Common myeloid progenitor, CD34-positive (primary cell): ENCODE measurements at regions of chr12 and their contacts with region 1.

Region 1: DNA sequence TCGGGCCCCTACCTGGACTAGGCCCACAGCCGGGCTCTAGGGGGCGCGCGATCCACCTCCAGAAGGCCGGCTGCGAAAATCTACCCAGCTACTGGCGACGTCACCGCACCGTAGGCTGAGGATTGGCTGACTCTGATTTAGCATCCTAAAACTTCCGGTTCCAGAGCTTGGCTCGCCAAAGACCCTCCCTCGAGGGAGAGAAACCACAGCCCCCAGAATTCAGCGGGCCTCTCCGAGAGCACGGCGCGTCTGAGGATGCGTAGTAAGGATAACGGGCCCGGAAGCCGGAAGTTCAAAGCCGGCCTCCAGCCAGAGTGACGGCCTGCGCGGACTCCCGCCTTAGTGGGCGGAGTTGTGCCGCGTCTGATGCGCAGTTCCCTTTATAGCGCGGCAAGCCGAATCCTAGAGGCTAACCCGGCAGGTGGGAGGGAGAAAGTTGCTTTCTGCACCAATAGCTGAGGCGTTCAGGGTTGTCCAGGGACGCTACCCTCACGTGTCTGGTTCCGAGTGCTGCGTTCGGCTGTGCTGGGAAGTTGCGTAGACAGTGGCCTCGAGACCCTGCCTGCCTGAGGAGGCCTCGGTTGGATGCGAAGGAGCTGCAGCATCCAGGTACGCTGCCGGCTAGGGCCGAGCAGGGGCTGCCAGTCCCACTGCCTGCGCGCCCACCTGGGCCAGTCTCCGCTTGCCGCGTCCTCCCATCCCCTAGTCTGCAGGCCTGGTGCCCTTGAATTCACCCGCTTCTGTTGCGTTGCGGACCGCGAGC is at the start of gene COX14:
- DNase-seq: peak; percentile 100
- H3K4me3 ChIP-seq: peak within 1 kb of the TSS; percentile 67 to 100 (median 88)
- H3K27ac ChIP-seq: peak within 1 kb of the TSS; percentile 68 to 95
- H3K4me1 ChIP-seq: peaks cover 0 to 29% (median 17%) of the 10 kb centered on the region in 4 experiments
- H3K27me3 ChIP-seq: no peaks in the 10 kb centered on the region

Region 2: GRCh38 chr12:50084775-50085614 is 26.9 kb before region 1 on chr12 and contains the start of gene SMARCD1:
- CTCF ChIA-PET with region 1: interaction called, 168 read pairs
- POLR2A ChIA-PET with region 1: interaction called, 10 read pairs
- DNase-seq: peak; percentile 92 to 97 (median 94)
- H3K4me3 ChIP-seq: peak within 1 kb of the TSS; percentile 42 to 99 (median 94)
- H3K27ac ChIP-seq: peak within 1 kb of the TSS; percentile 64 to 85
- H3K4me1 ChIP-seq: peaks cover 4 to 15% (median 10%) of the 10 kb centered on the region in 4 experiments
- H3K27me3 ChIP-seq: no peaks in the 10 kb centered on the region

Region 3: DNA sequence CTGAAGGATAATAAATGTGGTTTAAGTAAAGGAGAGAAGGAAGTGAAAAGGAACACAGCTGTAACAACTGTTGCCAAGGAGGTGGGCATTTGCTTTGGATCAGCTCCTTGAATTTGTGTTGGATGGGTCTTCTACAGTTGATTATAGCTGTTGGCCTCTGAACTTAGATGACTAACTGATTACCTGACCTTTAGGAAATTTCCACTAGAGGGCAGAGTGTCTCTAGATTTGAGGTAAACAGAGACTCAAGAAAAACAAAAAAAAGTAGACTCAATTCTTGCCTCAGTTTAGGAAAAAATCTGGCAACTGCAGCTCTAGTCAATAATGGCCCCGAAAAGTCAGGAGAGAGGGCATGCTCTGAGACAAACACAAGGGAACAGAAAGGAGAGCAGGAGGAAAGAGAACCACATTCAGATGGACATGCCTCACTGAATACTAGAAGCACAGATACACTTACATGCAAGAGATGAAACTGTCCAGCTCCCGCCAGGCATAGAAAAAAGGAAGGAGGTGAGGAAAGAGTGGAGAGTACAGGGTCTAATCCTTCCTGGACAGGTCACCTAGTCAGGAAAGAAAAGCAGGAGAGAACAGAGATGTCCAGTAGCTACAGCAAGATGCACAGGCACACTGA is 20.7 kb after region 1 on chr12:
- CTCF ChIA-PET with region 1: interaction called, 128 read pairs
- POLR2A ChIA-PET with region 1: no interaction called
- DNase-seq: peak; percentile 46 to 74 (median 51)
- H3K4me3 ChIP-seq: no peak overlapping the region
- H3K27ac ChIP-seq: no peak overlapping the region
- H3K4me1 ChIP-seq: no peaks in the 10 kb centered on the region
- H3K27me3 ChIP-seq: no peaks in the 10 kb centered on the region

Region 4: GRCh38 chr12:50167041-50167828 is 55.4 kb after region 1 on chr12 and contains the start of gene CERS5:
- CTCF ChIA-PET with region 1: interaction called, 63 read pairs
- POLR2A ChIA-PET with region 1: interaction called, 9 read pairs
- DNase-seq: peak; percentile 97 to 99 (median 99)
- H3K4me3 ChIP-seq: peak within 1 kb of the TSS; percentile 76 to 100 (median 93)
- H3K27ac ChIP-seq: peak within 1 kb of the TSS; percentile 81 to 92
- H3K4me1 ChIP-seq: peaks cover 7 to 19% (median 14%) of the 10 kb centered on the region in 4 experiments
- H3K27me3 ChIP-seq: no peaks in the 10 kb centered on the region

Region 5: DNA sequence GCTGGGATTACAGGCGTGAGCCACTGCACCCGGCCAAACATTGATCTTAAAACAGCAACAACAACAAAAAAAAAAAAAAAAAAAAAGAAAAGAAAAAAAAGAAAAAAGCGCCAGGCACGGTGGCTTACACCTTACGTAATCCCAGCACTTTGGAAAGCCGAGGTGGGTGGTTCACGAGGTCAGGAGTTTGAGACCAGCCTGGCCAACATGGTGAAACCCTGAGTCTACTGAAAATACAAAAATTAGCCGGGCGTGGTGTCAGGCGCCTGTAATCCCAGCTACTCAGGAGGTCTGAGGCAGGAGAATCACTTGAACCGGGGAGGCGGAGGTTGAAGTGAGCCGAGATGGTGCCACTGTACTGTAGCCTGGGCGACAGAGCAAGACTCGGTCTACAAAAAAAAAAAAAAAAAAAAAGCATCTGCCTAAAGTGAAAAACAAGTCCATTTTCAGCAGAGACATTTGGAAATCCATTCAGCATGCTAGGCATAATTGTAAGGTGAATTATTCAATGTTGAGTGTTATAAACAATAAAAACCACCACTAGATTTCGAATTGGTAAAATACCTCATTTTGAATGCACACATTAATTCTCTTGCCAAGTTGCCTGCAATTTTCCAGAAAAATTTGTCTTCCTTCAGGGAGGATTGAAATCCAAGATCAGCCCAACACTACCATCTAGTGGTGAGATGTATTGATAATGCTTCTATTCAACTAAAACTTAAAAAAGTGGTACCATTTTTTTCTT is 63.3 kb after region 1 on chr12:
- CTCF ChIA-PET with region 1: interaction called, 63 read pairs
- POLR2A ChIA-PET with region 1: no interaction called
- DNase-seq: peak; percentile 78 to 84 (median 79)
- H3K4me3 ChIP-seq: no peak overlapping the region
- H3K27ac ChIP-seq: no peak overlapping the region
- H3K4me1 ChIP-seq: no peaks in the 10 kb centered on the region
- H3K27me3 ChIP-seq: no peaks in the 10 kb centered on the region

Region 6: GRCh38 chr12:50271280-50272247 is 159.7 kb after region 1 on chr12:
- CTCF ChIA-PET with region 1: no interaction called
- POLR2A ChIA-PET with region 1: no interaction called
- DNase-seq: no peak
- H3K4me3 ChIP-seq: no peak overlapping the region
- H3K27ac ChIP-seq: peak overlapping the region in 1 of 2 experiments; percentile 66
- H3K4me1 ChIP-seq: peaks cover 3 to 12% (median 8%) of the 10 kb centered on the region in 4 experiments
- H3K27me3 ChIP-seq: no peaks in the 10 kb centered on the region